Heart left ventricle (tissue), 16 donors: ENCODE measurements at regions of chr14 and their contacts with region 1.

Region 1: DNA sequence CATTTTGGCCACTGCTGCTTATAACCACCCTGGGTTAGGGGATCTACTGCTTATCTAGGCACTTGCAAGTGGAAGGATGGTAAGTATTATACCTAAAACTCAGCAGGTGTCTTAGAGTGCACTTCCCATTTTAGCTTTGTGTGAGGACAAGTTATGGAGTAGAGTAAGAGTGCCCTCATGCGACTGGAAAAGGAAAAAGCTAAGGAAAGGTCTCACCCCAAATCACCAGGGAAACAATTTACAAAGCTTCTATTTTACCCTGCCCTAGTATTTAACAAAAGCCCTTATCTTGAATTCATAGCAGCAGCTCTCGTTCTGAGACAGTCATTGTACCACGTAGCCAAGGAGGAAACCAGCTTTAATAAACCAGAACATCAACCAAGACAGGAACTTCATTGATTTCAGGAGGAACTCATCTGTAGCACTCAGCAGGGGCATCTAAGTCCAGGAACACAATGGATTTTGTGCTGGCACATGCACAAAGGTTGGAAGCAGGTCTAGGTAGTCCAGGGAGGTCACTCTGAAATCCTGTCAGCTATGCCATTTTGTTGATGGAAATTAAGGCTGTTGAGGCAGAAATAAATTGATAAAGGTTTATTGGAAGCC is 2.9 kb downstream of the RDH12 start:
- DNase-seq: no peak
- ATAC-seq: peak; percentile 58 to 85 (median 75)
- H3K4me3 ChIP-seq: no peak overlapping the region
- H3K27ac ChIP-seq: no peak overlapping the region
- H3K4me1 ChIP-seq: peaks cover 0 to 6% (median 0%) of the 10 kb centered on the region in 12 donors
- H3K27me3 ChIP-seq: no peaks in the 10 kb centered on the region
- CTCF ChIP-seq: peak; percentile 59 to 81 (median 70)
- POLR2A ChIP-seq: no peak

Region 2: GRCh38 chr14:67526676-67527459 is 177.7 kb before region 1 on chr14:
- intact Hi-C with region 1: loop called in 5 of 10 experiments (anchors 5 to 10 kb)
- DNase-seq: peak in 3 of 5 donors; percentile 13 to 37 (median 24)
- ATAC-seq: peak in 3 of 4 donors; percentile 64 to 76 (median 72)
- H3K4me3 ChIP-seq: no peak overlapping the region
- H3K27ac ChIP-seq: no peak overlapping the region
- H3K4me1 ChIP-seq: no peaks in the 10 kb centered on the region
- H3K27me3 ChIP-seq: peaks cover 0 to 38% (median 0%) of the 10 kb centered on the region in 9 donors
- CTCF ChIP-seq: peak; percentile 31 to 75 (median 57)
- POLR2A ChIP-seq: no peak

Region 3: GRCh38 chr14:67583711-67584644 is 120.6 kb before region 1 on chr14:
- intact Hi-C with region 1: loop called (anchors 1 to 5 kb)
- DNase-seq: peak in 1 of 5 donors; percentile 23
- ATAC-seq: peak; percentile 55 to 87 (median 80)
- H3K4me3 ChIP-seq: no peak overlapping the region
- H3K27ac ChIP-seq: no peak overlapping the region
- H3K4me1 ChIP-seq: peaks cover 0 to 13% (median 0%) of the 10 kb centered on the region in 12 donors
- H3K27me3 ChIP-seq: no peaks in the 10 kb centered on the region
- CTCF ChIP-seq: peak; percentile 35 to 72 (median 62)
- POLR2A ChIP-seq: no peak

Region 4: GRCh38 chr14:67619446-67620216 is 85.0 kb before region 1 on chr14 and contains the start of gene ARG2:
- intact Hi-C with region 1: loop called in 9 of 10 experiments (anchors 1 to 10 kb)
- DNase-seq: peak; percentile 96 to 98 (median 97)
- ATAC-seq: peak; percentile 93 to 99 (median 98)
- H3K4me3 ChIP-seq: peak within 1 kb of the TSS; percentile 31 to 74 (median 67)
- H3K27ac ChIP-seq: peak within 1 kb of the TSS in 6 of 12 donors; percentile 11 to 76 (median 49)
- H3K4me1 ChIP-seq: peaks cover 0 to 32% (median 11%) of the 10 kb centered on the region in 12 donors
- H3K27me3 ChIP-seq: no peaks in the 10 kb centered on the region
- CTCF ChIP-seq: peak in 3 of 12 donors; percentile 5 to 22 (median 21)
- POLR2A ChIP-seq: peak in 1 of 2 donors; percentile 48
- total RNA-seq, gene ARG2: 0.61 to 6.3 (median 1.5) TPM

Region 5: GRCh38 chr14:67650694-67651093 is 53.9 kb before region 1 on chr14:
- intact Hi-C with region 1: no loop called
- DNase-seq: no peak
- ATAC-seq: no peak
- H3K4me3 ChIP-seq: no peak overlapping the region
- H3K27ac ChIP-seq: no peak overlapping the region
- H3K4me1 ChIP-seq: peaks cover 0 to 5% (median 0%) of the 10 kb centered on the region in 12 donors
- H3K27me3 ChIP-seq: no peaks in the 10 kb centered on the region
- CTCF ChIP-seq: no peak
- POLR2A ChIP-seq: no peak

Region 6: GRCh38 chr14:67892466-67893100 is 188.0 kb after region 1 on chr14:
- intact Hi-C with region 1: no loop called
- DNase-seq: no peak
- ATAC-seq: no peak
- H3K4me3 ChIP-seq: no peak overlapping the region
- H3K27ac ChIP-seq: no peak overlapping the region
- H3K4me1 ChIP-seq: no peaks in the 10 kb centered on the region
- H3K27me3 ChIP-seq: no peaks in the 10 kb centered on the region
- CTCF ChIP-seq: no peak
- POLR2A ChIP-seq: no peak